Activated B cell treated with CpG ODN at 0.5 μM for 24 hours (primary cell): ENCODE measurements at regions of chr1 and their contacts with region 1.

Region 1: GRCh38 chr1:32817159-32817814 is at the starts of genes S100PBP and YARS1:
- DNase-seq: peak; percentile 100
- ATAC-seq: peak; percentile 91
- H3K4me3 Mint-ChIP-seq: peak within 1 kb of the TSS; percentile 94
- H3K27ac Mint-ChIP-seq: peak within 1 kb of the TSS; percentile 85
- H3K4me1 Mint-ChIP-seq: peaks cover 66% of the 10 kb centered on the region
- H3K27me3 Mint-ChIP-seq: no peaks in the 10 kb centered on the region
- CTCF ChIP-seq: no peak
- total RNA-seq, gene S100PBP: 43.0 and 50.5 TPM in 2 replicates
- total RNA-seq, gene YARS1: 219 and 232 TPM in 2 replicates

Region 2: DNA sequence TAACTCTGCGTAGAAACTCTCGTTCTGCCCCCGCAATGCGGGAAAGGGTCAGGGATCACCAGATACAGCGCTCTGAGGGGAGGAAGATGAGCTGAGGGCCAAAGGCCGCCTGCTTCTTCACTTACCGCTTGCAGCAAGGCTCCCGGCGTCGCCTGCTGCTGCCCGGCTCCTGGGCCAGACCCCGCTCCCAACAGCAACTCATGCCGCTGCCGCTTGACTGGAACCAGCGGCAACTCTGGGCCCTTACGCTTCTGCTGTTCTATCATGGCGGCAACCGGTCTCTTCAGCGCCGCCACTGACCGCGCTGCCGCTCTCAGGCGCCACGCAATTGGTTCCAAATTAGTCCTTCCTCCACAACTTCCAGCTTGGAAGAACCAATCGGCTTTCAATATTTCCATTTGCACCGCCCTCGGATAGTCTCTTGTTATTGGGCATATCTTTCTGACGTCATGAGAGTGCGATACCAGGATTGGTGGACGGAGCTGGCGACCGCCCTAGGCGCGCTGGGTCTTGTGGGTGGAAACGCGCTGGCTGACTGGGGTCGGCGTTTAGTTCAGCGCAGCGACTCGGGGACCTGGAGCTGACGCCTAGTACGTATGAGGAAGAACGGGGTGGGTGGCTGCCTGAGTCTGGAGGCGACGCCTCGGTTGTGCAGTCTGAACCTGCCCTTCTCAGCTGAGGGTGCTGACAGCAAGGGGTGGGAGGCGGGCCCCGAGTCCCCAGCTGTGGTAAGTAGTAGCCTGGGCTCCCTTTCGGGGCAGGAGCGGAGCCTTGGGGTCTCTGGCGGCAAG is 1520.6 kb before region 1 on chr1 and contains the starts of genes SNRNP40 and ZCCHC17:
- CTCF ChIA-PET with region 1: no interaction called
- POLR2A ChIA-PET with region 1: no interaction called
- intact Hi-C with region 1: loop called (anchors 2 kb)
- DNase-seq: peak; percentile 79
- ATAC-seq: peak; percentile 96
- H3K4me3 Mint-ChIP-seq: no peak within 1 kb of the TSS
- H3K27ac Mint-ChIP-seq: no peak within 1 kb of the TSS
- H3K4me1 Mint-ChIP-seq: peaks cover 13% of the 10 kb centered on the region
- H3K27me3 Mint-ChIP-seq: no peaks in the 10 kb centered on the region
- CTCF ChIP-seq: no peak
- total RNA-seq, gene SNRNP40: 83.2 and 85.1 TPM in 2 replicates
- total RNA-seq, gene ZCCHC17: 19.5 and 19.9 TPM in 2 replicates

Region 3: GRCh38 chr1:32013386-32014198 is 803.7 kb before region 1 on chr1 and contains the start of gene KHDRBS1:
- CTCF ChIA-PET with region 1: no interaction called
- POLR2A ChIA-PET with region 1: no interaction called
- intact Hi-C with region 1: loop called (anchors 10 kb)
- DNase-seq: peak; percentile 97
- ATAC-seq: peak; percentile 85
- H3K4me3 Mint-ChIP-seq: peak within 1 kb of the TSS; percentile 98
- H3K27ac Mint-ChIP-seq: peak within 1 kb of the TSS; percentile 91
- H3K4me1 Mint-ChIP-seq: peaks cover 39% of the 10 kb centered on the region
- H3K27me3 Mint-ChIP-seq: no peaks in the 10 kb centered on the region
- CTCF ChIP-seq: no peak
- total RNA-seq, gene KHDRBS1: 146 and 152 TPM in 2 replicates

Region 4: GRCh38 chr1:32801096-32801715 is 16.1 kb before region 1 on chr1:
- CTCF ChIA-PET with region 1: no interaction called
- POLR2A ChIA-PET with region 1: interaction called, 15 read pairs
- intact Hi-C with region 1: loop called (anchors 1 kb)
- DNase-seq: no peak
- ATAC-seq: peak; percentile 25
- H3K4me3 Mint-ChIP-seq: no peak overlapping the region
- H3K27ac Mint-ChIP-seq: peak overlapping the region; percentile 37
- H3K4me1 Mint-ChIP-seq: peaks cover 42% of the 10 kb centered on the region
- H3K27me3 Mint-ChIP-seq: no peaks in the 10 kb centered on the region
- CTCF ChIP-seq: no peak

Region 5: GRCh38 chr1:32964461-32965250 is 147.4 kb after region 1 on chr1 and contains the start of gene RNF19B:
- CTCF ChIA-PET with region 1: no interaction called
- POLR2A ChIA-PET with region 1: interaction called, 16 read pairs
- intact Hi-C with region 1: loop called (anchors 10 kb)
- DNase-seq: peak; percentile 92
- ATAC-seq: peak; percentile 91
- H3K4me3 Mint-ChIP-seq: peak within 1 kb of the TSS; percentile 90
- H3K27ac Mint-ChIP-seq: peak within 1 kb of the TSS; percentile 91
- H3K4me1 Mint-ChIP-seq: peaks cover 37% of the 10 kb centered on the region
- H3K27me3 Mint-ChIP-seq: no peaks in the 10 kb centered on the region
- CTCF ChIP-seq: no peak
- total RNA-seq, gene RNF19B: 22.7 and 23.6 TPM in 2 replicates

Region 6: DNA sequence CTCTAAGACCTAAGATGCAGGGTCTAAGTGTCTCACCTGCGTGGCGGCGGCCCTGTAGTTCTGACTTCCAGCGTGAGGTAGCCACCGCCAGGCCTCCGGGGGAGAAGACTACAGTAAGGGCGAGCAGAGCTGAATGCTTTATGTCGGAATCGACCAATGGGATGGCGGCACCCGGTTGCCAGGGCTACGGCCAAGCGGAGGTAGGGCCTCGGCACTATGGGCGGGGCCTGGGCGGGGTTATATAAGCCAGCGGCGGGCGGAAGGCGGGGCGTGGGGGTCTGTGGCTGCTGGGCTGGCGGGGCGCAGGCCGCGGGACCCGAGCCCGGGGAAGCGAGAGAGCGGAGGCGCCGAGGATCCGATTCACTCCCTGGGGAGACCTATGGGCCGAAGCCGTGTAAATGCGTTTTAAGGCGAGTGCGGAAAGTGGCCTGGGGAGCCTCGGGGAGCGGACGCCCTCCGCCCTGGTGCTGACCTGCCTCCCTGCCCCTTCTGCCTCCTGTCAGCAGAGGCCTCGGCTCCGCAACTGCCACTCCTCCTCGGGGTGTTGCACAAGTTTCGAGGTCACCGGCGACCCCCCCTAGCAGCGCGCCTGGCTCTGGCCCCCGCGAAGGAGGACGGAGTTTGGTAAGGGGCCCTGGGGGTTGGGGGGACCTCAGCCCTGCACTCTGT is 263.7 kb after region 1 on chr1 and contains the start of gene AZIN2:
- CTCF ChIA-PET with region 1: no interaction called
- POLR2A ChIA-PET with region 1: no interaction called
- intact Hi-C with region 1: loop called (anchors 2 kb)
- DNase-seq: peak; percentile 94
- ATAC-seq: peak; percentile 99
- H3K4me3 Mint-ChIP-seq: peak within 1 kb of the TSS; percentile 82
- H3K27ac Mint-ChIP-seq: no peak within 1 kb of the TSS
- H3K4me1 Mint-ChIP-seq: peaks cover 17% of the 10 kb centered on the region
- H3K27me3 Mint-ChIP-seq: peaks cover 3% of the 10 kb centered on the region
- CTCF ChIP-seq: no peak
- total RNA-seq, gene AZIN2: 0.82 and 0.93 TPM in 2 replicates

Region 7: DNA sequence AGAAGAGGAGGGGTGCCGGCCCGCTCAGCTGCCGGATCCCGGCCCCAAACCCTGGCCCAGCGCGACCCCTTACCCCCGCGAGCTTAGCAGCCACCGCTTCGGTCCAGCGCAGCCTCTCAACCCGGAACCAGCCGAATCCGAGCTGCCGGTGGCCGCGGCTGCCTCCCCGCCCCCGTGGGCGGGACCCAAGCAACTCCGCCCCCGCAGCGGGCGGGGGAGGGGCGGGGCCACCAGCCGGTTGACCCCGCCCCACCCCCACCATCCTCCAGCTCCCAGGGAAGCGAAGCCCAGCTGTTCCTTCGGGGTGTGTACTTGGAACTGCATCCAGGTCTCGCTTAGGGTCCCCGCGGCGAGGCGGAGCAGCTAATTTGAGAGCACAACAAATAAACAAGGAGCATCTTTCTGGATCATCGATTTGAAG is 364.6 kb after region 1 on chr1 and contains the start of gene TRIM62:
- CTCF ChIA-PET with region 1: no interaction called
- POLR2A ChIA-PET with region 1: interaction called, 5 read pairs
- intact Hi-C with region 1: loop called (anchors 5 kb)
- DNase-seq: peak; percentile 80
- ATAC-seq: peak; percentile 67
- H3K4me3 Mint-ChIP-seq: peak within 1 kb of the TSS; percentile 89
- H3K27ac Mint-ChIP-seq: peak within 1 kb of the TSS; percentile 79
- H3K4me1 Mint-ChIP-seq: peaks cover 21% of the 10 kb centered on the region
- H3K27me3 Mint-ChIP-seq: peaks cover 9% of the 10 kb centered on the region
- CTCF ChIP-seq: no peak
- total RNA-seq, gene TRIM62: 10.1 and 10.9 TPM in 2 replicates